Left cardiac atrium (tissue), 4 donors: ENCODE measurements at regions of chr16 and their contacts with region 1.

Region 1: DNA sequence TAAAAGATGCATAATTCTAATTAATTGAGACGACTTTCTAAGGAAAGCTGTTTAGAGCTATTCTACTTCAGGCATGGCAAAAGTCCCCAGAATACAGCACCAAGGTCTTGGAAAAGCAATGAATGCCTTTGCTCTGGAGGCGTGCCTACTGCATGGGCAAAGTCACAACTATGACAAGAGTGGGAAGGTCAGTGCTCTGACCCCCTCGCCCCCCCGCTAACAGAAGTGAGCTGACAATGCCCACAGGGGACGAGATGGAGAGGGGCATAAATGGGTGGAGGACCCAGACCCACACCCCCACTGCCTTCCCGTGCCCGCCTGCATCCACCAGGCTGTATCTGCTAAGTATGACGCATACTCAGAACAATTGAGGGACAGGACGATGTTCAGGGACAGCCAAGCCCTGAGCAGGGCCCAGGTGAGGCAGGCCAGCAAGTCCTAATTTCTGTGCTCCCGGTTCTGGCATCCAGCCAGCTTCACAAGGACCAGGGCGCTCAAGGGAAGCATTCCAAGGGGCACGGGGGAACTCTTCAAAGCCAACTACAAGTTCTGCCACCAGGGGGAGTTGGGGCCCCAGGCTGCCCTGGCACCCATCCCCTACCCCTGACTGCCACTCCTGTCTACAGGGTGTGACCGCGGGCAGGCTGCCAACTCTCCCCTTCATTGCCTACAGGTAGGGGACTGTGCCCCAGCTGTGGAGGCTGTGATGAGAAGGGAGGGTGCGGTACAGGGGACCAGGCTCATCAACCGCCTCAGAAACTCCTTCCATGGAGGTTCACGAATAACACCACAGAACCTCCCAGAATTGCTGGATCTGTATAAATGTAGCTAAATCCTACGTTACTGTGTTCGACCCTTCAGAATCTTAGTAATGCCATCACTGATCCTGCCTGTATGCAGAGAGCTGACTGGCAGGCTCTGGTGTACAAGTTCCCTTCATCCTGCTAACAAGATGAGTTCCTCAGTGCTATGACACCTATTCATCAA is 20.8 kb downstream of the NPRL3 start:
- DNase-seq: peak; percentile 68
- ATAC-seq: peak in 1 of 2 donors; percentile 55

Region 2: DNA sequence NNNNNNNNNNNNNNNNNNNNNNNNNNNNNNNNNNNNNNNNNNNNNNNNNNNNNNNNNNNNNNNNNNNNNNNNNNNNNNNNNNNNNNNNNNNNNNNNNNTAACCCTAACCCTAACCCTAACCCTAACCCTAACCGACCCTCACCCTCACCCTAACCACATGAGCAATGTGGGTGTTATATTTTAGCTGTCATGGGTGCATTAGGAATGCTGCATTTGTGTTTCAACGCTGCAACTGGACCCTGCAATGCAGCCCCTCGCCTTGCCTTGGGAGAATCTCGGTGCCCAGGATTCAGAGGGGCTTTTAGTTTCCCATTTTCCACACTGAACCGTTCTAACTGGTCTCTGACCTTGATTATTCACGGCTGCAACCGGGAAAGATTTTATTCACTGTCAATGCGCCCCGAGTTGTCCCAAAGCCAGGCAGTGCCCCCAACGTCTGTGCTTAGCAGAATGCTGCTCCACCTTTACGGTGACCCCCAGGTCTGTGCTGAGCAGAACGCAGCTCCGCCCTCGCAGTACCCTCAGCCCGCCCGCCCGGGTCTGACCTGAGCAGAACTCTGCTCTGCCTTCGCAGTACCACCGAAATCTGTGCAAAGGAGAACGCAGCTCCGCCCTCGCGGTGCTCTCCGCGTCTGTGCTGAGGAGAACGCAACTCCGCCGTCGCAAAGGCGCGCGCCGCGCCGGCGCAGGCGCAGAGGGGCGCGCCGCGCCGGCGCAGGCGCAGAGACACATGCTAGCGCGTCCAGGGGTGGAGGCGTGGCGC is 107.6 kb before region 1 on chr16:
- intact Hi-C with region 1: no loop called
- DNase-seq: no peak
- ATAC-seq: peak; percentile 95 to 97

Region 3: GRCh38 chr16:61149-61878 is 56.4 kb before region 1 on chr16:
- intact Hi-C with region 1: no loop called
- DNase-seq: peak; percentile 31
- ATAC-seq: no peak

Region 4: DNA sequence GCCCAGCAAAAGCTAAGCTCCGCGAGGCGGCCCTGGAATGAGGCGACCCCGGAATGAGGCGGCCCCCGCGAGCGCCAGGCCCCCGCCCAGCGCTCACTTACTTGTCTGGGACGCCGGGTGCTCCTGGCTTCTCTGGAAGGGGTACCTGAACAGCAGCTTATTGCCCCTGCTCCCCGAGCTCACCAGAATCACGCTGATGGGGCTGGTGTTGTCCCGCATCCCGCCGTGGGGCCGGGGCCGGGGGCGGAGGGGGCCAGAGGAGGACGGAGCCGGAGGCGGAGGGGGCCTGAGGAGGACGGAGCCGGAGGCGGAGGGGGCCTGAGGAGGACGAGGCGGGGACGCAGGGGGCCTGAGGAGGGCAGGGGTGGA is 20.4 kb after region 1 on chr16:
- intact Hi-C with region 1: no loop called
- DNase-seq: no peak
- ATAC-seq: peak; percentile 20 to 56

Region 5: GRCh38 chr16:309476-309875 is 191.8 kb after region 1 on chr16:
- intact Hi-C with region 1: no loop called
- DNase-seq: no peak
- ATAC-seq: no peak

Region 6: DNA sequence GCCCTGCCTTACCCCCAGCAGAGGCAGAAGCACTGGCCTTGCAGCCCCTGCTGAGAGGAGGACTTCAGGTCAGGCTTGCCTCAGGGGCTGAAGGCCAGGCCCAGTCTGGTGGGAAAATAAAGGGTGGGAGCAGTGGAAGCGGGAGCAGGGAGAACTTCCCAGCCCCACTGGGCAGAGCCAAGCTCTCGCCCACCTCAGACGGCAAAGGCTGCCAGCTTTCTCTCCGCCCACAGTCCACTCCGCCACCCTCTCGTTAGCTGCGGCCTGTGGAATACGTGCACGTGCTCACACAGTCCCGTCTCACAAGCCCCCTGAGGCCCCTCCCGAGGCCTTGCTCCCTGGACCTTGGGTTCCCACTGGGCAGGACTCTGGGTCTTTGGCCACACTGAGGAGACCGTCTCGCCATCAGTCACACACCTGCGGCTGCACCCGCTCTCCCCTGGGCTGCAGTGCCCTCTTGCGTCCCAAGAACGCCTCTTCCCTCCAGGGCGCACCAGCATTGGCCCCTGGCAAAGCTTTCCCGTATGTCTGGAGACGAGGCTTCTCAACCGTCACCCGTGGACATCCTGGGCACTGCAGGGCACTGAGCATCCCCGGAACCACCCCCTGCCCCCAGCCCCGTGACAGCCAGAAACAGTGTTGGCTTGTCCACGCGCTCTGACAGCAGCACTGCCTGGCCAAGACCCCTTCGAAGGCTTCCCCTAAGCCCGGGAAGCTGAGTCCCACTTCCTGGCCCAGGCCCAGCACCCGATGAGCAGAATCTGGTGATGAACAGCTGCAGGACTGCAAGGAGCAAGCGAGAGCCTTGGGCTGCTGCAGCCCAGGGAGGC is 244.4 kb after region 1 on chr16:
- intact Hi-C with region 1: loop called (anchors 5 kb)
- DNase-seq: peak; percentile 77
- ATAC-seq: peak; percentile 83 to 84